Left ventricle myocardium superior (tissue), 1 donor: ENCODE measurements at regions of chr4 and their contacts with region 1.

Region 1: DNA sequence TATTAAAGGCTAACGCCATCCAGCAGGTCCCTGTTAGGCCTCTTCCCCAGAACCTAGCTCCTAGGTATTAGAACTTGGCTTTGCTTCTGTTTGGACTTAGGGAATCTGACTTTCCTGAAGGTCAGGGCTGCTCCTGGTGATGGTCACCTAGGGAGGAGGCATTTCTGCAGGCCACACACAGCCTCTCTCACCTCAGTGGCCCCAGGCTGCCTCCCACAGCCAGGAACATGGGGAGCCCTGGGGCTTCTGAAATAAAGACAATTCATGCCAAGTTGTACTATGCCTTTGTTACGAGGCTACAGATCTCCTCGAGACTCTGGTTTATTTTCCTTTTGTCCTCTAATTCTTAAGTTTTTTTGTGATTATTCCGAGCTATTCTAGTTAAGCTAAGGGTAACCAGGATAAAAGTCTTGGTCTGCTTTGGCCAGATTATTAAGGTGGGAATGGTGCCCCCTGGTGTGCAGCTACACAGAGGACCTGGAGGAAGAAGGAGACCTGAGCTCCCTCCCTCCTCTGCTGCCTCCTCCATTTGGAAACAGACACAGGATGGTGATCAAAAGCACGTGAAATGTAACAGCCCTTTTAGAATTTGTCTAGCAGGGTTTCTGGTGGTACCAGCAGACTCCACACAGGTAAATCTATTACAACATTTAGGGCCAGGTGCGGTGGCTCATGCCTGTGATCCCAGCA is 131.0 kb downstream of the DCLK2 start:
- DNase-seq: peak; percentile 78
- ATAC-seq: peak; percentile 81

Region 2: GRCh38 chr4:150007512-150007911 is 201.8 kb before region 1 on chr4:
- intact Hi-C with region 1: loop called (anchors 5 kb)
- DNase-seq: no peak
- ATAC-seq: no peak

Region 3: DNA sequence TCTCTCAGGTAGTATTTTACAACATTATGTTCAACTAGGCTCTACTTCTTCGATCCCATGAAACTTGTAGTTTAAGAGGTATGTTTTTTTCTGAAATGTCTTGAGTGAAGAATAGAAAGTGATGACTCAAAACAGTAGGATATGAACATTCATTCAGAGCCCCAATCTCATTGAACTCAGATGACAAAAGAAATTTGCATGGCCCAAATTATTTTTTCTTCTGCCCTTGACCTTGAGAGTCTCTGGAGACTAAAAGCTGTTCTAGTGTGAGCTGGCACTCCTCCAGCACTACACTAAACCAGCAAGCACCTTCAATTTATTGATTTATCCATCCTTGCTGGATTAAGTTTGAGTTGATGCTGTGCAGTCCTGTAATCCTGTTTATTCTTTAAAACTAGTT is 127.0 kb before region 1 on chr4:
- intact Hi-C with region 1: loop called (anchors 5 kb)
- DNase-seq: no peak
- ATAC-seq: no peak